T-cell (primary cell): ENCODE measurements at regions of chr12 and their contacts with region 1.

Region 1: DNA sequence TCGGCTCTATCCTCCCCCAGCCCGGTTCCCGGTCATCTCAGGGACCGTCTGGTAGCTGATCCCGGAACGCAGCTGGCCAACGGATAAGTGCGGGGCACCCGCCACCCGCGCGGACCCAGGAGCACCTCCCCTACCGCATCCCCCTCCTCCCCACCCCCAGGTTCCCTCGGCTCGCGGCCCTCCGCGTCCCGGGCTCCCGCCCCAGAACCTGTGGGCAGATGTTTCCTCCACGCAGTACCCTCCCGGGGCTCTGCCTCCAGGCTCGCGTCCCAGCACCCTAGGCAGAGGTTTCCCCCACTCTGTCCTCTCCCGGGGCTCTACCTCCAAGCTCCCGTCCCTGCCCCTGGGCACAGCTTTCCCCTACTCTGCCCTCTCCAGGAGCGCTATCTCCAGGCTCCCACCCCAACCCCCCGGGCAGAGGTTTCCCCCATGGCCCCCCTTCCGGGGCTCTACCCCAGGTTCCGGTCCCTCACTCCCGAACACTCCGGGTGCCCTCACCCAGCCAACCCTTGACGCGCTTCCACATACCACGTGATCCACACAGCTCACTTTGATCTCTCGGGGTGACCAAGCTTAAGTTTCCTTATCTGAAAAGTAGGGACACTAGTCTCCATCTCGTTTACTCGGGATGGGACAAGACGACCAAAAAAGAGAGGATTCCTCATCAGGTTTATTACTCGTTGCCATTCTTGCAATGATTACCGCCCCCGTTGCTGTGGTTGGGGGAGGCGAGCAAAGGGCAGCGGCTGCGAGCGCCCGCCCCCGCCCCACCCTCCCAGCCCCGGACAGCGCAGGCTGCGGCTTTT is at the start of gene CCDC38:
- DNase-seq: peak; percentile 65 to 88 (median 78)
- ATAC-seq: peak; percentile 94 to 96 (median 94)
- H3K4me3 ChIP-seq: peak within 1 kb of the TSS; percentile 94
- H3K4me3 Mint-ChIP-seq: peak within 1 kb of the TSS; percentile 91 to 96 (median 94)
- H3K27ac ChIP-seq: peak within 1 kb of the TSS; percentile 82
- H3K27ac Mint-ChIP-seq: peak within 1 kb of the TSS; percentile 85 to 92
- H3K4me1 ChIP-seq: peaks cover 0 to 15% of the 10 kb centered on the region in 2 experiments
- H3K4me1 Mint-ChIP-seq: peaks cover 5 to 12% (median 9%) of the 10 kb centered on the region in 3 donors
- H3K27me3 ChIP-seq: no peaks in the 10 kb centered on the region
- H3K27me3 Mint-ChIP-seq: no peaks in the 10 kb centered on the region
- total RNA-seq, gene CCDC38: 0.14 to 1.4 (median 0.49) TPM in 3 of 5 donors, not detected in the others

Region 2: DNA sequence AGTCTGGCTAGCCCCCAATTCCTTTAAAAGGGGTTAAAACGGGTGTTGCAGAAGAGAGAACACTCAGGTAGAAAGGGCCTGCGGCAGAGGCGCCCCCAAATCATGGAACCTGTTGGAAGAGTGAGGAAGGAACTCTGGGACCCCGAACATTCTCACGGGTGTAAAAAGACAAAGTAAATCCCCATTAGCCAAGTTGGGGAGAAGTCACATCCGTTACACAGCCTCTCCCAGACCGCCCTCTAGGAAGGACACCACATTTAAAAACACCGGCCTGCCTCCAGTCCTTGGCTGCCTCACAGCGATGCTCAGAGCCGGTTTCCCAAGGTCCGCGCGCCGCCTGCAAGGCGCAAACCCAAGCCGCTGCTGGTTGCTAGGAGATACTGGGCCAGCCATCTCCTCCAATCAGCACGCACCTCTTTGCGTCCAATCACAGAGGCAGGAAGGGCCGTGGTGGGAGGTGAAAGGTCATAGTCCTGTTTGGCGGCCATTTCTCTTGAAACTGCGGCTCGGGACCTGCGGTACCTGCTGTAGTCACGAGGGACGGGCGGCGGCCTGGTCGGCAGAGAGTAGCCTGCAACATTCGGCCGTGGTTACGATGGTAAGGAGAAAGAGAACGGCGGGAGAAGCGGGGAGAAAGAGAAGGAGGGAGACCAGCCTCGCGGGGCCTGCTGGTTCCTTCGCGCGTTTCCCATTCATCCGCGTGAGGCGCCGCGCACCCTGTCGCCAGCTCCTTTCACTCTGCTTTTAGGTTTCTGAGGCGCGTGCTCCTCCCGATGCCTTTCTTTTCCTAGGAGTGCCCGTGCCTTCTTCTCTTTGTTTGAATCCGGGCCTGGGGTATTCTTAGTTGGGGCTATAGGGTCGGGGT is 84.0 kb before region 1 on chr12 and contains the start of gene SNRPF:
- CTCF ChIA-PET with region 1: no interaction called
- POLR2A ChIA-PET with region 1: no interaction called
- DNase-seq: peak; percentile 79 to 96 (median 90)
- ATAC-seq: peak; percentile 94 to 98 (median 96)
- H3K4me3 ChIP-seq: peak within 1 kb of the TSS; percentile 88 to 95
- H3K4me3 Mint-ChIP-seq: peak within 1 kb of the TSS in 1 of 3 donors; percentile 63
- H3K27ac ChIP-seq: peak within 1 kb of the TSS; percentile 84
- H3K27ac Mint-ChIP-seq: no peak within 1 kb of the TSS
- H3K4me1 ChIP-seq: peaks cover 13 to 26% of the 10 kb centered on the region in 2 experiments
- H3K4me1 Mint-ChIP-seq: peaks cover 0 to 31% (median 28%) of the 10 kb centered on the region in 3 donors
- H3K27me3 ChIP-seq: peaks cover 0 to 3% of the 10 kb centered on the region in 2 experiments
- H3K27me3 Mint-ChIP-seq: peaks cover 0 to 3% of the 10 kb centered on the region in 2 donors
- total RNA-seq, gene SNRPF: 14.0 to 33.6 (median 19.3) TPM

Region 3: DNA sequence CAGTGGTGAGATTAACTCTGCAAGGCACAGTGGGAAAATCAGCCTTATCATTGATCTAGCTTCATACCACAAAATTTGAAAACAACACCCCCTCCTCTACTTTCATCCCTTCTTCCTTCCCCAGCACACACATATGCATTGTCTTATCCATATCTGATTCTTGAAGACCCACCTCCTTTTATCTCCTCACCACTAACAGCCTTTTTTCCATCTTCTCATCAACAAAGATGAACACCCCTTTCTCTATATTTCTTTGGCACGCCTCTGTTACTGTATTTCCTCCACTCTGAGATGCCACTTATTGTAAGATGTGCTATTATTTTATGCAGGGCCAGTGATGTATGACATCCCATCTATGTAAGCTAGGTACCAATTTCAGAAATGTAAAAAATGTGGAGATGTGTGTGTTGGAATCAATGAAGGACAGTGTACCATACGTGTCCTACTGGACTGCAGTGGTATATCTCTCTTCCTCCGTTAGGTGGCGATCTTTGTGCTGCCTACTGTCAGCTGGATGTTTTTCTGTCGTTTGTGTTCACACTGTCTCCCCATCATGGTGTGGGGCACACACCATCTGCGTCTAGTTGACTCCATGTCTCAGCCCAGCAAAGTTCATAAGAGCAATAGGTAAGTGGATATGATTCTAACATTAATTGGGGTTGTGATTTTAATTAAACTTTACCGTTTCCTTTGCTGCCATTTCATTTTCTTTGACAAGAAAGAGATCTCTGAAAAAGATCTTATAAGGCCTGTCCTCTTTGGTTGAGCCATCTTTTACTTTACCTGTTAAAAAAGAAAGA is 24.3 kb before region 1 on chr12:
- CTCF ChIA-PET with region 1: interaction called, 3 to 16 read pairs
- POLR2A ChIA-PET with region 1: no interaction called
- DNase-seq: peak in 32 of 35 experiments; percentile 1 to 75 (median 25)
- ATAC-seq: peak; percentile 86 to 97 (median 92)
- H3K4me3 ChIP-seq: no peak overlapping the region
- H3K4me3 Mint-ChIP-seq: no peak overlapping the region
- H3K27ac ChIP-seq: no peak overlapping the region
- H3K27ac Mint-ChIP-seq: no peak overlapping the region
- H3K4me1 ChIP-seq: no peaks in the 10 kb centered on the region
- H3K4me1 Mint-ChIP-seq: no peaks in the 10 kb centered on the region
- H3K27me3 ChIP-seq: peaks cover 0 to 3% of the 10 kb centered on the region in 2 experiments
- H3K27me3 Mint-ChIP-seq: peaks cover 0 to 1% of the 10 kb centered on the region in 2 donors

Region 4: GRCh38 chr12:95967301-95967700 is 24.6 kb after region 1 on chr12:
- CTCF ChIA-PET with region 1: no interaction called
- POLR2A ChIA-PET with region 1: no interaction called
- DNase-seq: no peak
- ATAC-seq: no peak
- H3K4me3 ChIP-seq: no peak overlapping the region
- H3K4me3 Mint-ChIP-seq: no peak overlapping the region
- H3K27ac ChIP-seq: no peak overlapping the region
- H3K27ac Mint-ChIP-seq: no peak overlapping the region
- H3K4me1 ChIP-seq: no peaks in the 10 kb centered on the region
- H3K4me1 Mint-ChIP-seq: no peaks in the 10 kb centered on the region
- H3K27me3 ChIP-seq: no peaks in the 10 kb centered on the region
- H3K27me3 Mint-ChIP-seq: no peaks in the 10 kb centered on the region

Region 5: DNA sequence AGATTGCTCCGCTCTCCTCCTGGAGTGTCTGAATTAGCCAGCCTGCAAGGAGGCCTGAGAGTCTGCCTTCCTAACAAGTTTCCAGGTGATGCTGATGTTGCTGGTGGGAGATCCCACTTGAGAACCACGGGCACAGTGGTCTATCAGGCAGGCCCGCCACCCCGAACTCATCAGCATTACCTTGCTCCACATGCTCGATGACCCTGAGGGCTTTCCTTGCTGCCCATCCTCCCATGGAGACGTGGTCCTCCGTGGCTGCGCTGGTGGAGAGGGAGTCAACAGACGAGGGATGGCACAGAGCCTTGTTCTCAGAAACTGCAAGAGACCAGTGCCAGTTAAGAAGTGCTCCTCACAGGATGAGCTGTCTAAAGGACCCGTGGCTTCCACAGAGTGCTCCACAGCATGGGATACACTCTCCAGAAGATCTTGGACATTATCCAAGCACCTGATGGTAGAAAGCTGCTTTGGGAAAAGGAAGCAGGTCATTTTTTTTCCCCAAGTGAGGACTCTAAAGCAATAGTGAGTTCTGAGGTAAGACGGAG is 35.1 kb after region 1 on chr12:
- CTCF ChIA-PET with region 1: no interaction called
- POLR2A ChIA-PET with region 1: interaction called in 1 of 2 experiments, 11 read pairs
- DNase-seq: no peak
- ATAC-seq: no peak
- H3K4me3 ChIP-seq: no peak overlapping the region
- H3K4me3 Mint-ChIP-seq: no peak overlapping the region
- H3K27ac ChIP-seq: no peak overlapping the region
- H3K27ac Mint-ChIP-seq: no peak overlapping the region
- H3K4me1 ChIP-seq: no peaks in the 10 kb centered on the region
- H3K4me1 Mint-ChIP-seq: no peaks in the 10 kb centered on the region
- H3K27me3 ChIP-seq: no peaks in the 10 kb centered on the region
- H3K27me3 Mint-ChIP-seq: no peaks in the 10 kb centered on the region

Region 6: GRCh38 chr12:96047229-96048211 is 104.8 kb after region 1 on chr12:
- CTCF ChIA-PET with region 1: no interaction called
- POLR2A ChIA-PET with region 1: no interaction called
- DNase-seq: peak in 1 of 35 experiments; percentile 58
- ATAC-seq: peak; percentile 65 to 73 (median 71)
- H3K4me3 ChIP-seq: no peak overlapping the region
- H3K4me3 Mint-ChIP-seq: peak overlapping the region; percentile 43 to 68 (median 55)
- H3K27ac ChIP-seq: peak overlapping the region; percentile 55
- H3K27ac Mint-ChIP-seq: peak overlapping the region; percentile 91 to 96
- H3K4me1 ChIP-seq: peaks cover 6 to 27% of the 10 kb centered on the region in 2 experiments
- H3K4me1 Mint-ChIP-seq: peaks cover 40 to 56% (median 53%) of the 10 kb centered on the region in 3 donors
- H3K27me3 ChIP-seq: no peaks in the 10 kb centered on the region
- H3K27me3 Mint-ChIP-seq: no peaks in the 10 kb centered on the region

Region 7: GRCh38 chr12:96263449-96263902 is 320.7 kb after region 1 on chr12:
- CTCF ChIA-PET with region 1: no interaction called
- POLR2A ChIA-PET with region 1: no interaction called
- DNase-seq: no peak
- ATAC-seq: no peak
- H3K4me3 ChIP-seq: no peak overlapping the region
- H3K4me3 Mint-ChIP-seq: no peak overlapping the region
- H3K27ac ChIP-seq: no peak overlapping the region
- H3K27ac Mint-ChIP-seq: peak overlapping the region in 1 of 2 donors; percentile 17
- H3K4me1 ChIP-seq: peaks cover 0 to 3% of the 10 kb centered on the region in 2 experiments
- H3K4me1 Mint-ChIP-seq: peaks cover 28 to 41% (median 34%) of the 10 kb centered on the region in 3 donors
- H3K27me3 ChIP-seq: no peaks in the 10 kb centered on the region
- H3K27me3 Mint-ChIP-seq: no peaks in the 10 kb centered on the region